ENCODE measurements at regions of chr5 and their contacts with region 1.

Region 1: GRCh38 chr5:143195491-143195890 is 208.0 kb downstream of the NR3C1 start:
- DNase-seq: no peak
- ATAC-seq: peak; percentile 60

Region 2: DNA sequence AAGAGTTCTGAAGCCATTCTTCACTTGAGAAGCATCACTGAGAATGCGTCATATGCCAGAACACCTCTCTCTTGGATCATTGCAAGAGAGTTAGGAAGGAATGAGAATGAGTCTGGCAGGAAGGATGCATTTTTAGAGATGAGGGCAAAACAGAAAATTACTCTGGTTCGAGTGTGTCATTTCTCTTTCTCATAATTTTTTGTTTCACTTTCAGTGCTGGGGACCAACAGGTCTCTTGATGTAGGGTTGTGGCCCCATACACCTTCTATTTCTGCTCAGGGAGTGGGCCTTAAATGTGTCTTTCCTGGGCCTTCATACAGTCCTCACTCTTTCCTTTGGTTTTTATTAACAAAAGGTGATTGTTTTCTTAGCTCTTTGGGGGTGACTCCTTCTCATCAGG is 94.4 kb before region 1 on chr5:
- intact Hi-C with region 1: loop called (anchors 5 kb)
- DNase-seq: no peak
- ATAC-seq: no peak